ENCODE measurements at regions of chr9 and their contacts with region 1.

Region 1: GRCh38 chr9:110256380-110257096 is at the start of gene TXN:
- DNase-seq: peak; percentile 38 to 84
- H3K4me3 ChIP-seq: peak within 1 kb of the TSS; percentile 82 to 94 (median 92)
- H3K27ac ChIP-seq: peak within 1 kb of the TSS; percentile 39
- H3K4me1 ChIP-seq: peaks cover 8 to 18% (median 10%) of the 10 kb centered on the region in 4 experiments
- H3K27me3 ChIP-seq: no peaks in the 10 kb centered on the region; a peak in 1 of 7 replicates
- CTCF ChIP-seq: no peak
- EP300 ChIP-seq: no peak
- POLR2A ChIP-seq: peak; percentile 79 to 91
- RAD21 ChIP-seq: no peak
- total RNA-seq, gene TXN: 295 and 297 TPM in 2 replicates

Region 2: GRCh38 chr9:110121170-110121569 is 135.4 kb before region 1 on chr9:
- CTCF ChIA-PET with region 1: no interaction called
- POLR2A ChIA-PET with region 1: no interaction called
- DNase-seq: no peak
- H3K4me3 ChIP-seq: no peak overlapping the region
- H3K27ac ChIP-seq: peak overlapping the region; percentile 16; the same call in 1 of the 2 replicates
- H3K4me1 ChIP-seq: peaks cover 9 to 43% (median 22%) of the 10 kb centered on the region in 4 experiments
- H3K27me3 ChIP-seq: no peaks in the 10 kb centered on the region; a peak in 1 of 7 replicates
- CTCF ChIP-seq: no peak
- EP300 ChIP-seq: no peak
- POLR2A ChIP-seq: no peak
- RAD21 ChIP-seq: no peak

Region 3: DNA sequence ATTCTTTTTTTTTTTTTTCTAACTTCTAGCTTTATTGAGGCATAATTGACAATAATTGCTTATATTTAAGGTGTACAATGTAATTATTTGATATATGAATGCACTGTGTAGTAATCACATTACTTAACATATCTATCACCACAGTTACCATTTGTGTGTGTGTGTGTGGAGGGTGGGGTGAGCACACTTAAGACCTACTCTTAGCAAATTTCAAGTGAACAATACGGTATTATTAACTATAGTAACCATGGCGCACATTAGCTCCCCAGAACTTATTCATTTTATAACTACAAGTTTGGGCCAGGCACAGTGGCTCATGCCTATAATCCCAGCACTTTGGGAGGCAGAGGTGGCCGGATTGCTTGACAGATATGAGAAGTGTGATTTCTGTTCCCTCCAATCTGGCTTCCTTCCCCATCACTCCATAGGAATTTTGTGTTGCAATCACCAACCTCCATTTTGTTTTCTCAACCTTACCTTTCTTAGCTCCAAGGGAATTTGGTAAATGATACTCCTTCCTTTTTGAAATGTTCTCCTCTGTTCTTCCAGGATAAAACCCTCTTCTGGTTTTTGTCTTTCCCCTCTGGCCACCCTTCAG is 15.2 kb before region 1 on chr9:
- CTCF ChIA-PET with region 1: no interaction called
- POLR2A ChIA-PET with region 1: interaction called, 19 read pairs
- DNase-seq: no peak
- H3K4me3 ChIP-seq: no peak overlapping the region
- H3K27ac ChIP-seq: no peak overlapping the region
- H3K4me1 ChIP-seq: no peaks in the 10 kb centered on the region
- H3K27me3 ChIP-seq: no peaks in the 10 kb centered on the region
- CTCF ChIP-seq: no peak
- EP300 ChIP-seq: no peak
- POLR2A ChIP-seq: no peak
- RAD21 ChIP-seq: no peak

Region 4: DNA sequence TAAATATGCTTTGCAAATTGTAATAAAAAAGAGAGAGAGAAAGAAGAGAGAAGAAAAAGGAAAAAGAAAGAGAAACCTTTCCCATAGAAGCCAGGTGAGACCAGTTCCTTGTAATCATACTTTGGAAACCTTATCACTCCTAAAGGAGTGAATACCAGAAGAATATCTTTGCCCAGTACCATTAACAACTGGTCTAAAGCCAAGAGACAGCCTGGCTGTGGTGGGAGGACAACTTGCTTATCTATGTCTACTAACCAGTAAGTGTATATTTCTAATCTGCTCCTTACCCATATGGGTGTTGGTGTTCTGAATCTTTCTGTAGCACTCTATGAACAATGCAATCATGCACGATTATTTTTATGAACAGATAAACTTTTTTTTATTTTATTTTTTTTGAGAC is 10.3 kb after region 1 on chr9:
- CTCF ChIA-PET with region 1: interaction called, 16 read pairs
- POLR2A ChIA-PET with region 1: interaction called, 44 read pairs
- DNase-seq: no peak
- H3K4me3 ChIP-seq: no peak overlapping the region
- H3K27ac ChIP-seq: no peak overlapping the region
- H3K4me1 ChIP-seq: no peaks in the 10 kb centered on the region
- H3K27me3 ChIP-seq: no peaks in the 10 kb centered on the region
- CTCF ChIP-seq: no peak
- EP300 ChIP-seq: no peak
- POLR2A ChIP-seq: no peak
- RAD21 ChIP-seq: no peak

Region 5: DNA sequence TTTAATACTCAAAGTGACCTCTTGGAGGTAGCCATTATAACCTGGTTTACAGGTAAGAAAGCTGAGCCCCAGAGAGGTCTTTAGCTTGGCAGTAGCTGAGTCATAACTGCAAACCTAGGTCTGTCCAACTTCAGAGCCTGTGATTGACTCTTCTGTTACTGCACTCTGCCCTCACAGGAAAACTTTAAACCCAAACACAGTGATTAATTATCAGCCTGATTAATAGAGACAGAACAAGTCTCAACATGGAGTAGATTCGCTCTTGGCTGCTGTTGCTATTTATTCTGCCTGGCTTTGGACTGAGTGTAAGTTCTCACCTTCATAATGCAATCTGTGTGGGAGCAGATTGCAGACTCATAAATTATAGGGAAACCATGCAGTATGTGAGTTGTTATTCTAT is 27.2 kb after region 1 on chr9:
- CTCF ChIA-PET with region 1: interaction called, 3 read pairs
- POLR2A ChIA-PET with region 1: interaction called, 20 read pairs
- DNase-seq: no peak
- H3K4me3 ChIP-seq: no peak overlapping the region
- H3K27ac ChIP-seq: no peak overlapping the region
- H3K4me1 ChIP-seq: no peaks in the 10 kb centered on the region
- H3K27me3 ChIP-seq: no peaks in the 10 kb centered on the region
- CTCF ChIP-seq: no peak
- EP300 ChIP-seq: no peak
- POLR2A ChIP-seq: no peak
- RAD21 ChIP-seq: no peak

Measured in H1 (cell line).